Tibial artery (tissue), 4 donors: ENCODE measurements at regions of chr2 and their contacts with region 1.

Region 1: GRCh38 chr2:65064728-65065552 is 8.7 kb downstream of the CEP68 start:
- DNase-seq: peak; percentile 83 to 91
- H3K4me3 ChIP-seq: no peak overlapping the region
- H3K27ac ChIP-seq: peak overlapping the region; percentile 42 to 60
- H3K4me1 ChIP-seq: peaks cover 0 to 88% (median 52%) of the 10 kb centered on the region in 4 donors
- H3K27me3 ChIP-seq: no peaks in the 10 kb centered on the region
- CTCF ChIP-seq: peak; percentile 59 to 83

Region 2: DNA sequence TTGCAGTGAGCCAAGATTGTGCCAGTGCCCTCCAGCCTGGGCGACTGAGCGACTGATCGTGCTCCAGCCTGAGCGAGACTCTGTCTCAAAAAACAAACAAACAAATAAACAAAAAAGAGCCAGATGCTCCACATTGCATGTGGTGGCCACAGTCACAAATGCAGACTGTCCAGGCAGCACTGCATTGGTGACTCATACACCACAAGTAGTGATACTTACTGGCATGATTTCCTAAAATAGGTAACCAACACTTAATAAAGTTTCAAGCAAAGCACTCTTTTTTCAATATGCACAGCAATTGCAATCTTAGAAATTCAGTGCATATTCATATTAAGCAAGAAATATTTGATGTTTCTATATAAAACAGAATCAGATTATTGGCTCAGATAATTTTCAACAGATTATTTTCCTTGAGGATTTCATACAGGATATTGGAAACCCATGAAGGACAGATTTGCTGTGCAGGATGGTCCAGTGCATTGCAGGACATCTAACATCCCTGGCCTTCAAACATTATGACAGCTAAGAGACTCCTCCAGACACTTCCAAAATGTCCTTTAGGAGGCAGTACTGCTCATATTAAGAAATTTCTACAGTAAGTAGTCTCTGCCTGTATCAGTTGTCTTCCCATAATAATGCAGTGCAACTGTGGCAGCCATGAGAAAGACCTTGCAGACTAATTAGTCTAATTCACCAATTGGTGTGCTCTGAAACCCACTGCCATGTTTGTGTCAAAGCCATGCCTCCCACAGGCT is 86.2 kb before region 1 on chr2:
- intact Hi-C with region 1: no loop called
- DNase-seq: no peak
- H3K4me3 ChIP-seq: no peak overlapping the region
- H3K27ac ChIP-seq: no peak overlapping the region
- H3K4me1 ChIP-seq: peaks cover 0 to 23% (median 11%) of the 10 kb centered on the region in 4 donors
- H3K27me3 ChIP-seq: no peaks in the 10 kb centered on the region
- CTCF ChIP-seq: no peak

Region 3: DNA sequence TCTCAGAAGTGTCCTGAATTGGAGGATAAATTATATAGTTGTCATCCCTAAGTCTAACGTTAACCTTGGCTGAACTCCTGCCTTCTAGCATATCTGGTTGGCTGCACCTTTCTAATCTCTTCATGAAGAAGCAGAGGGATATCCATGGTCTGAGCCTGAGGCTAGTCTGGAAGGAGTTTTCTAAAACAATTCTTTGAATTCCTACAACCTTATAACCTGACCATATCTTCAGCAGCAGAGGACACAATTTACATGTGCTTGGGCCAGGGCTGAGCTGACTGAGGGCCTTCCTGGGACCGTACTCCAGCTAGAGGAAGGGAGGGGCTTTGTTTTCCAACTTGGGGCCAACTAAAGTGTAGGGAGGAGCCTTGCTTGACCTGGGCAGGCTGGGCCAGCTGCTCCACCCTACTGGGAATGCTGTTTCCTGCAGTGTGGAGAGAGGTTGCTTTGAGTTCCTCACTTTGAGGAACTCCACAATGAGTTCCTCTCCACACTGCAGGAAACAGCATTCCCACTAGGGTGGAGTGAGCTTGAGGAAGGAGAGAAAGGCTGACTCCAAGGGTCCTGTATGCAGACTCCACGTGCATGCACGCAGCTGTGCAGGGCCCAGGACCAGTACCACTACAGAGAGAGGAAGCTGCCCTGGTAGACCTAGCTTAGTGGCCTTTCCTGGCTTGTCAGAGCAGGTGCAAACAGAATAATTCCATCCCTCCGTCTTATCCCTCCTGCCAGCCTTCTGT is 10.8 kb after region 1 on chr2:
- intact Hi-C with region 1: no loop called
- DNase-seq: no peak
- H3K4me3 ChIP-seq: no peak overlapping the region
- H3K27ac ChIP-seq: peak overlapping the region; percentile 45 to 53
- H3K4me1 ChIP-seq: peaks cover 0 to 36% (median 26%) of the 10 kb centered on the region in 4 donors
- H3K27me3 ChIP-seq: no peaks in the 10 kb centered on the region
- CTCF ChIP-seq: no peak

Region 4: DNA sequence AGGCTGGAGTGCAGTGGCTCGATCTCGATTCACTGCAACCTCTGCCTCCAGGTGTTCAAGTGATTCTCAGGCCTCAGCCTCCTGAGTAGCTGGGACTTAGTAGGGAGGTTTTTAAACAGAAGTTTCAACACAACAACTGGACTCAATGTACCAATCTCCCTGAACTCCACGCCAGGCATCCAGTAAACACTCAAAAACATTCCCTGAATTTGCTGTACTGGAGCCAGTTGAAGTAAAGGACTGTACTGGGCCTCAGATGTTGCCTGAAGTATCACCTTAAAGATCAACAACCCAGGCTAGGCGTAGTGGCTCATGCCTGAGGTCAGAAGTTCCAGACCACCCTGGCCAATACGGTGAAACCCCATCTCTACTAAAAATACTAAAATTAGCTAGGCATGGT is 42.6 kb after region 1 on chr2:
- intact Hi-C with region 1: no loop called
- DNase-seq: no peak
- H3K4me3 ChIP-seq: no peak overlapping the region
- H3K27ac ChIP-seq: no peak overlapping the region
- H3K4me1 ChIP-seq: peaks cover 0 to 66% (median 20%) of the 10 kb centered on the region in 4 donors
- H3K27me3 ChIP-seq: no peaks in the 10 kb centered on the region
- CTCF ChIP-seq: no peak

Region 5: DNA sequence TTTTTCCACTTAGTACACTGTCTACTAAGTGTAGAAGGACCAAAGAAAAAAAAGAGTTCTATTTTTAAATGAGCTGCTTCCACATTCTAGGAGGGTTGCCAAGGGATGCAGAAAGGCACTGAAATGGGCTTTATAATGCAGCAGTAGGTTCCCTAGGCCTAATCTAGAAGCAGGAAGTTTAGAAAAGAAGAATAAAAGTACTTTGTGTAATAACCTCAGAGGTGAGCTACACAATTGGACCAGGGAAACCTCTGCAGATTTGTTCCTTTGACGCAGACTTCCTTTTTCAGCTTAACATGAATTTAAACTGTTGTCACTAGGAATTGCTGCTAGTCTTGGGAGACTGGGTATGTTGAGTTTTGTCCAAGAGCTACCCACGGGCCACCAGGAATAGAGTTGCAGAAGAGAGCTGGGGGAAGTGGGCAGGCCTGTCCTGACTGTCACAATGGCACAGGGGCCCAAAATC is 99.5 kb after region 1 on chr2:
- intact Hi-C with region 1: loop called (anchors 5 kb)
- DNase-seq: peak in 1 of 2 donors; percentile 27
- H3K4me3 ChIP-seq: no peak overlapping the region
- H3K27ac ChIP-seq: peak overlapping the region; percentile 64 to 66
- H3K4me1 ChIP-seq: peaks cover 0 to 23% (median 13%) of the 10 kb centered on the region in 4 donors
- H3K27me3 ChIP-seq: no peaks in the 10 kb centered on the region
- CTCF ChIP-seq: no peak

Region 6: GRCh38 chr2:65186872-65187851 is 122.2 kb after region 1 on chr2:
- intact Hi-C with region 1: loop called (anchors 5 kb)
- DNase-seq: peak; percentile 71 to 88
- H3K4me3 ChIP-seq: no peak overlapping the region
- H3K27ac ChIP-seq: no peak overlapping the region
- H3K4me1 ChIP-seq: peaks cover 0 to 8% (median 3%) of the 10 kb centered on the region in 4 donors
- H3K27me3 ChIP-seq: no peaks in the 10 kb centered on the region
- CTCF ChIP-seq: peak; percentile 80 to 83

Region 7: GRCh38 chr2:65554765-65555591 is 490.0 kb after region 1 on chr2:
- intact Hi-C with region 1: loop called (anchors 10 kb)
- DNase-seq: peak in 1 of 2 donors; percentile 41
- H3K4me3 ChIP-seq: no peak overlapping the region
- H3K27ac ChIP-seq: no peak overlapping the region
- H3K4me1 ChIP-seq: peaks cover 0 to 5% (median 2%) of the 10 kb centered on the region in 4 donors
- H3K27me3 ChIP-seq: no peaks in the 10 kb centered on the region
- CTCF ChIP-seq: no peak